ENCODE measurements at regions of chr1 and their contacts with region 1.

Region 1: DNA sequence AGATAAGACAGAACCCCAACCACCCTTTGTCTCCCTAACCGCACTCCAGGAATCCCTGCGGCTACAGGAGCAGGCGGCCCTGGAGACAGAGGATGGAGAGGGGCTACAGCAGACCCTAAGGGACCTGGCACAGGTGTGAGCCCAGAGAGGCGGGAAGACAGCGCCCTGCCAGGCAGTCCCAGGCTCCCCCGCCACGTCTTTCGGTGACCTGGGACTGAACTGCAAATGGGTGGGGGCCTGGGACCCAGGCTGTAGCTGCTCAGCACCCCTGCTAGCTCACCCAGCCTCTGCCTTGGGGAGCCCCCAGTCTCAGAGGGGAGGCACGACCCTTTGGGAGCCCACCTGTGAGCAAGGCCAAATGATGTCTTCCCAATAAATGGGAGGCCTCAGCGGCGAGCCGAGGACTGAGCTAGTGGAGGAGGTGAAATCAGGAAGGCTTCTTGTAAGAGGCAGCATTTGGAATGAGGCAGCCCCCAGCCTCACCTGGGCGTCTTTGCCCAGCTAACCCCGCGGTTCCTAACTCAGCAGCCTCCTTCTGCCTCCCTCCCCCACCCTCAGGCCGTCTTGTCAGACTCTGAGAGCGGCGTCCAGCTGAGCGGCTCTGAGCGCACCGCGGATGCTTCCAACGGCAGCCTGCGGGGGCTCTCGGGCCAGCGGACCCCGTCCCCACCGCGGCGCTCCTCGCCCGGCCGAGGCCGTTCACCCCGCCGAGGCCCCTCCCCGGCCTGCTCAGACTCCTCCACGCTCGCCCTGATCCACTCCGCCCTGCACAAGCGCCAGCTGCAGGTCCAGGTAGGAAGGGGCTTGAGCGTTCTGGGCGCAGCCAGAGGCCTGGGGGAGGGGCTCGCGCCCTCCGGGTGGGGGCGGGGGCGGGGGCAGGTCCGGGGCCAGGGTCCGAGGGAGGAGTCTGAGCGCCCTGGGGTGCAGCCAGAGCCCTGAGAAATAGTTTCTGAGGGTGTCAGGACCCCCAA is 16.9 kb downstream of the CROCC start:
- DNase-seq: no peak
- H3K4me3 ChIP-seq: no peak overlapping the region
- H3K4me3 Mint-ChIP-seq: no peak overlapping the region
- H3K27ac ChIP-seq: no peak overlapping the region
- H3K27ac Mint-ChIP-seq: peak overlapping the region in 1 of 8 donors; percentile 33
- H3K4me1 ChIP-seq: no peaks in the 10 kb centered on the region
- H3K4me1 Mint-ChIP-seq: no peaks in the 10 kb centered on the region
- H3K27me3 ChIP-seq: no peaks in the 10 kb centered on the region
- H3K27me3 Mint-ChIP-seq: no peaks in the 10 kb centered on the region

Region 2: DNA sequence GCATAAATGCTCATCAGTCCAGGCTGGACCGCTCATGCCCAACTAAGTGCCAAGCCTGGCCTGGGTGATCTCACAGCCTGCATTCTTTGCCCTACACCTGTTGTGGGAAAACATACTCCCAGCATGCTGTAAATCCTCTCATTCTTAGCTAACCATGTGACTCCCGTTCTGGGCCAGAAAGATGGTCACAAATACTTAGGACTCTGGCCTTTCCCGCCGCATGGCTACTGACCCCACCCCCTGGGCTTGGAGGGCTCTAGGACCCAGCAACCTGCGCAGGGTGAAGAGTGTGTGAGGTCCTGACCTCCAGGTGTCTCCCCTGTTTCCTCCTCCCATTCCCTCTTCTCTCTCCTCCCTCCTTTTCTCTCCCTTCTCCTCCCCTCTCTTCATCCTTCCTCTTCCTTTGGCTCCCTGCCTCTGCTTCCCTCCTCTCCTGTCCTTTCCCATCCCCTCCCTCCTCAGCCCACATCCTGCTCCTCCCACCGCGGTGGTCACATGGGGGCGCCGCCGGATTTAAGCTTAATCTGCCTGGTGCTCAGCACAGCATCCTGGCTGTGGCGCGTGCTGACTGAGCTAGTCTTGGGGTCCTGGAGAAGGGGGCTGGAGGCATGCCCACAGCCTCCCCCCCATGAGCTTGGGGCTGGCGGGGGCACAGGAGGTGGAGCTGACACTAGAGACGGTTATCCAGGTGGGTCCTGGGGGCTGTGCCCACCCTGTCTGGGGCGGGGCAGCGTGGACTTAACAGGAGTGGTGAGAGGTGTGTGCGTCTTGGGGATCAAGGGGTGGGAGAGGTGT is 17.0 kb before region 1 on chr1 and contains the start of gene CROCC:
- CTCF ChIA-PET with region 1: no interaction called
- POLR2A ChIA-PET with region 1: no interaction called
- DNase-seq: peak in 4 of 5 donors; percentile 22 to 64 (median 38)
- H3K4me3 ChIP-seq: peak within 1 kb of the TSS; percentile 30
- H3K4me3 Mint-ChIP-seq: peak within 1 kb of the TSS; percentile 7 to 83 (median 79)
- H3K27ac ChIP-seq: no peak within 1 kb of the TSS
- H3K27ac Mint-ChIP-seq: peak within 1 kb of the TSS; percentile 15 to 94 (median 74)
- H3K4me1 ChIP-seq: peaks cover 10% of the 10 kb centered on the region
- H3K4me1 Mint-ChIP-seq: peaks cover 26 to 47% (median 31%) of the 10 kb centered on the region in 3 donors
- H3K27me3 ChIP-seq: no peaks in the 10 kb centered on the region
- H3K27me3 Mint-ChIP-seq: no peaks in the 10 kb centered on the region
- total RNA-seq, gene CROCC: 25.6 to 30.1 TPM

Region 3: DNA sequence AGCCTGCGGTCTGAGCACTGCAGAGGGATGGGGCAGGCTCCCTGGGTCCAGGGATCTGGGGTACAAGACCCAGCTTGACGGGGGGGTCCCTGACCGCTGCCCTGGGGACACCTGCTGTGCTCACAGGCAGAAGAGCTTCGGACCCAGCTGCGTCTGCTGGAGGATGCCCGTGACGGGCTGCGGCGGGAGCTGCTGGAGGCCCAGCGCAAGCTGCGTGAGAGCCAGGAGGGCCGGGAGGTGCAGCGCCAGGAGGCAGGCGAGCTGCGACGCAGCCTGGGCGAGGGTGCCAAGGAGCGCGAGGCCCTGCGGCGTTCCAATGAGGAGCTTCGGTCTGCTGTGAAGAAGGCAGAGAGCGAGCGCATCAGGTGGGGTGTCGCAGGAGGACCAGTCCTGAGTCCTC is 16.6 kb after region 1 on chr1:
- CTCF ChIA-PET with region 1: no interaction called
- POLR2A ChIA-PET with region 1: no interaction called
- DNase-seq: no peak
- H3K4me3 ChIP-seq: no peak overlapping the region
- H3K4me3 Mint-ChIP-seq: no peak overlapping the region
- H3K27ac ChIP-seq: no peak overlapping the region
- H3K27ac Mint-ChIP-seq: no peak overlapping the region
- H3K4me1 ChIP-seq: peaks cover 2% of the 10 kb centered on the region
- H3K4me1 Mint-ChIP-seq: peaks cover 1 to 8% (median 2%) of the 10 kb centered on the region in 3 donors
- H3K27me3 ChIP-seq: no peaks in the 10 kb centered on the region
- H3K27me3 Mint-ChIP-seq: no peaks in the 10 kb centered on the region

Region 4: GRCh38 chr1:17017440-17017839 is 78.8 kb after region 1 on chr1:
- CTCF ChIA-PET with region 1: no interaction called
- POLR2A ChIA-PET with region 1: interaction called, 15 read pairs
- DNase-seq: no peak
- H3K4me3 ChIP-seq: no peak overlapping the region
- H3K4me3 Mint-ChIP-seq: no peak overlapping the region
- H3K27ac ChIP-seq: no peak overlapping the region
- H3K27ac Mint-ChIP-seq: no peak overlapping the region
- H3K4me1 ChIP-seq: no peaks in the 10 kb centered on the region
- H3K4me1 Mint-ChIP-seq: no peaks in the 10 kb centered on the region
- H3K27me3 ChIP-seq: no peaks in the 10 kb centered on the region
- H3K27me3 Mint-ChIP-seq: no peaks in the 10 kb centered on the region